ENCODE measurements at regions of chr20 and their contacts with region 1.

Region 1: GRCh38 chr20:3710703-3711483 is 1.5 kb downstream of the SIGLEC1 start:
- DNase-seq: peak; percentile 82
- H3K4me3 Mint-ChIP-seq: no peak overlapping the region
- H3K27ac Mint-ChIP-seq: no peak overlapping the region
- H3K4me1 Mint-ChIP-seq: no peaks in the 10 kb centered on the region
- H3K27me3 Mint-ChIP-seq: peaks cover 7% of the 10 kb centered on the region

Region 2: GRCh38 chr20:3358676-3359340 is 352.1 kb before region 1 on chr20:
- CTCF ChIA-PET with region 1: no interaction called
- POLR2A ChIA-PET with region 1: no interaction called
- intact Hi-C with region 1: no loop called
- DNase-seq: no peak
- H3K4me3 Mint-ChIP-seq: no peak overlapping the region
- H3K27ac Mint-ChIP-seq: no peak overlapping the region
- H3K4me1 Mint-ChIP-seq: no peaks in the 10 kb centered on the region
- H3K27me3 Mint-ChIP-seq: no peaks in the 10 kb centered on the region

Region 3: DNA sequence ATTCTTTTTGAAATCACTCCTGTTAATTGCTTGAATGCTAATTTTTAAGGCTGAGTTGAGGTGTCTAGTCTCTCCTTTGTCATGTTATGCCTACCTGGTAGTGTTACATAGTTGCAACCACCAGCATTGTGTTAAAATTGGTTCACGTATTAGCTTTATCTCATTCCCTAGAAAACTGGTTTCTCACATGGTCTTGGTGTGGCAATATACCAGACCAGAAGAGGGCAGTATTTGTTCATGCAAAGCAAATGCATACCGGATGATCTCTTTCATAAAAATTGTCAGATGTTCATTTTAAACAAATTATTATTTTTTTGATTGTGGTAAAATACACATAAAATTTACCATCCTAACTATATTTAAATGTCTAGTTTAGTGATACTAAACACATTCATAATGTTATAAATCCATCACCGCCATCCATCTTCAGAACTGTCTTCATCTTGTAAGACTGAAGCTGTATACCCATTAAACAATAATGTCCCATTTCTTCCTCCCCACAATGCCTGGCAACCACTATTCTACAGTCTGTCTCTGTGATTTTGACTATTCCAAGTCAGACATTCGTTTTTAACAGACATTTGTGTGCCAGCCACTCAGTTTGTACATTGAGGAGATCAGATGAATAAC is 147.2 kb before region 1 on chr20:
- CTCF ChIA-PET with region 1: interaction called, 25 read pairs
- POLR2A ChIA-PET with region 1: no interaction called
- intact Hi-C with region 1: loop called (anchors 10 kb)
- DNase-seq: no peak
- H3K4me3 Mint-ChIP-seq: no peak overlapping the region
- H3K27ac Mint-ChIP-seq: no peak overlapping the region
- H3K4me1 Mint-ChIP-seq: no peaks in the 10 kb centered on the region
- H3K27me3 Mint-ChIP-seq: no peaks in the 10 kb centered on the region

Region 4: DNA sequence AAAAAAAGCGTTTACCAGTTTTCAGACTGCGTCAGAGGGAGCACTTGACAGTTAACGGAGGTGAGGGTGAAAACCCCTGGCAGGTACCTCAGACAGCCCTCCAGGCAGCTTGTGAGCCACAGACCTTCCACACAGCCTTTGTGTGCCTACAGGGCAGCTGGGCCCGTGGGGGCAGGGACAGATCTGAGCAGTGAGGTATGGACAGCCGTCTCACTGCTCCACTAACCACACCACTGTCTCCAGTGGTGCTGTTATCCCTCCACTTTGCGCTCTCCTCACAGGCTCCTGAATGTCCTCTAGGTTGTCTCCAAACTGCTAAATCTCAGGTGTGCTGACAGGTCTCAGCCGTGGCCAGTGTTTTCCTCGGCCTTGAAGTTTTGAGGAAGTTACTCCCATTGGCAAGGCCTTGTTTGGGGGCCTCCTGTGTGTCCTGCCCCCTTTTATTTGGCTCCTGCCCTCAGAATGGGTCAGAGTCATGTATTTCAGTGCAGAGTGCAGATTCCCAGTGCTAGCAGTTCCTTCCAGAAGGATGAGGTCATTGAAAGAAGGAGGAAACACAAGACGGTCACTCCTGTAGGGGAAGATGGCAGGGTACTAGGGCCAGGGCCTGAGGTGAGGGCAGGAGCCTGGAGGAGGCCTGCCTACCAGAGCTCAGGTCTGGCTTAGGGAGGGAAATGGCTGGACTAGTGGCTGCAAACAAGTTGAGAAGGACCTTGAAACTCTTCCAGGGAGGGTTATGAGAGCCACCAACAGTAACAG is 59.5 kb before region 1 on chr20:
- CTCF ChIA-PET with region 1: no interaction called
- POLR2A ChIA-PET with region 1: no interaction called
- intact Hi-C with region 1: no loop called
- DNase-seq: no peak
- H3K4me3 Mint-ChIP-seq: no peak overlapping the region
- H3K27ac Mint-ChIP-seq: no peak overlapping the region
- H3K4me1 Mint-ChIP-seq: no peaks in the 10 kb centered on the region
- H3K27me3 Mint-ChIP-seq: no peaks in the 10 kb centered on the region

Region 5: DNA sequence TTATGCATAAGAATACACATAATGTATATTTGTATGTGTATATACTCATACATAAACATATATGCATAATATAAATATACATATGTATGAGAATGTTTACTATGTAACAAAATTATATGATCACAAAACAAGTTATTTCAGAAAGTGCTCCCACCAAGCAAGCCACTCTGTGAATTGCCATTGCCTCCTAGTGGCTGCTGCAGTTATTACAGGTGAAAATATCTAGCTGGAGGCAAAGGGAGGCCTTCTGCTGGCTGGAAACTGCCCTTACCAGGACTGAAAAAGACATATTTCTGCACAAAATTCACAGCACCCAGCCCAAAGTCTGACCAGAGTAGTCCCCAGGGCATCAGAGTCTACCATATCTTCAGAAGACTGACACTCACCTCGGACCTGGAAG is 14.7 kb before region 1 on chr20:
- CTCF ChIA-PET with region 1: interaction called, 16 read pairs
- POLR2A ChIA-PET with region 1: no interaction called
- intact Hi-C with region 1: no loop called
- DNase-seq: no peak
- H3K4me3 Mint-ChIP-seq: no peak overlapping the region
- H3K27ac Mint-ChIP-seq: no peak overlapping the region
- H3K4me1 Mint-ChIP-seq: no peaks in the 10 kb centered on the region
- H3K27me3 Mint-ChIP-seq: no peaks in the 10 kb centered on the region

Region 6: GRCh38 chr20:3721912-3722311 is 11.0 kb after region 1 on chr20:
- CTCF ChIA-PET with region 1: interaction called, 15 read pairs
- POLR2A ChIA-PET with region 1: no interaction called
- intact Hi-C with region 1: no loop called
- DNase-seq: no peak
- H3K4me3 Mint-ChIP-seq: no peak overlapping the region
- H3K27ac Mint-ChIP-seq: no peak overlapping the region
- H3K4me1 Mint-ChIP-seq: no peaks in the 10 kb centered on the region
- H3K27me3 Mint-ChIP-seq: peaks cover 19% of the 10 kb centered on the region

Region 7: GRCh38 chr20:3744806-3745685 is 34.2 kb after region 1 on chr20:
- CTCF ChIA-PET with region 1: interaction called, 12 read pairs
- POLR2A ChIA-PET with region 1: no interaction called
- intact Hi-C with region 1: no loop called
- DNase-seq: peak; percentile 85
- H3K4me3 Mint-ChIP-seq: peak overlapping the region; percentile 46
- H3K27ac Mint-ChIP-seq: no peak overlapping the region
- H3K4me1 Mint-ChIP-seq: peaks cover 7% of the 10 kb centered on the region
- H3K27me3 Mint-ChIP-seq: peaks cover 2% of the 10 kb centered on the region

Measured in activated CD4-positive, alpha-beta memory T cell treated with anti-CD3 and anti-CD28 coated beads for 36 hours (primary cell).